Activated B cell treated with CpG ODN at 0.5 μM for 24 hours (primary cell): ENCODE measurements at regions of chr18 and their contacts with region 1.

Region 1: DNA sequence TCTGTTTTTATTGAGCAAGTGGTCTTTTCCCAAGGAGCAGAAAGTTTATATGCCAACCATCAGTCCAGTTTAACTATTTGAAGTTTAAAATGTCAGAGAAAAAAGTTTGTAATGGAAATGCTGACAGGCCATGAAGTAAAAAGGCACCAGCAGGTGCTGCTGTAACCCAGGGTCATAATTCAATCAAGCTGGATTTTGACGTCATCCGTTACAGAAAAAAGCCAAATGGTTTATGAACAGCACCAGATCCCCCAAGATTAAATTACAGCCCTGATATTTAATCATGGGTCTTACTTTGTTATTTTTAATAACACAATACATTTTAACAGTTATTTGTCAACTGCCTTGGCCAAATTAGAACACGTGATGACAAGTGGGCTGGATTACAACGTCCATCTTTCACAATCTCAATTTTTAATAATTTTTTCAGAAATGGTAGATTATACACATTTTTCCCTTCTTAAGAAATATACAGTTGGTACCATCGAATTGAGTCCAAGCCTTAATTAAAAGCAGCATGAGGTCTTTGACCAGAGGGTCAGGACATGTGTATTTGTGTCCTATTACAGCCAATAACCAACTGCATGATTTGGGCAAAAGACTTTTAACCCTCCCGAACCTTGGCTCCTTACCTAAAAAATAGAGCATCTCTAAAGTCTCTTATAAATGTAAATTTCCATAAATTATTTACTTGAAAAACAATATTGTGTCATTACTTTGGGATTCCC is 10.0 kb downstream of the TCF4 start:
- DNase-seq: no peak
- ATAC-seq: no peak
- H3K4me3 Mint-ChIP-seq: no peak overlapping the region
- H3K27ac Mint-ChIP-seq: no peak overlapping the region
- H3K4me1 Mint-ChIP-seq: peaks cover 17% of the 10 kb centered on the region
- H3K27me3 Mint-ChIP-seq: peaks cover 2% of the 10 kb centered on the region
- CTCF ChIP-seq: no peak

Region 2: DNA sequence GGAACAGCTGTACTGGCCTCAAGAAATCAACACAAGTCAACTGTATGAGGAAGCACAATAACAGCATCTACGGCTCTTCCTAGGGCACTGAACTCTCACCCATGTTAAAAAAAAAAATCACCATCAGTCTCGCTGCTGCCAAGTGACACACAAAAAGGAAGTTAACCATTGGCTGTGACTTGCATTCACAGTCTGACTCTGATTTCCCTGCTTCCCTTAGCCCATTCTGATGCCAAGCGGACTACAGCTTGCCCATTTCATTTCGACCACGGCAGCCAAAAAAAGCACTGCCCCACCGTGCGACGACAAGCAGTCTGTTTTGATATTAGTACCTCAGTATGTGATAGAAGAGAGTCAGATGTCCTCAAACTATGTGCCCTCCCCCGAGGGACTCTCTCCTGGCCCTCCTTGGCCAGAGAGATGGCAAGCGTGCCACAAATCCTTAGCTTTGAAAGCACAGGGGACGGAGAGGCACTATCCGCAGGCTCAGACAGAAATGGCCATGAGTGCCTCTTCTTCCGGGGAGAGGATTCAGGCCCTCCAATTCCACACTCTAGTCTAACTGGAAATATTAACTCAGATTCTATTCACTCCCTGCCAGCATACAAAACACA is 240.0 kb before region 1 on chr18:
- CTCF ChIA-PET with region 1: no interaction called
- POLR2A ChIA-PET with region 1: no interaction called
- intact Hi-C with region 1: loop called (anchors 5 kb)
- DNase-seq: peak; percentile 24
- ATAC-seq: peak; percentile 81
- H3K4me3 Mint-ChIP-seq: peak overlapping the region; percentile 76
- H3K27ac Mint-ChIP-seq: peak overlapping the region; percentile 81
- H3K4me1 Mint-ChIP-seq: peaks cover 35% of the 10 kb centered on the region
- H3K27me3 Mint-ChIP-seq: no peaks in the 10 kb centered on the region
- CTCF ChIP-seq: no peak

Region 3: GRCh38 chr18:55384551-55385275 is 193.3 kb before region 1 on chr18:
- CTCF ChIA-PET with region 1: no interaction called
- POLR2A ChIA-PET with region 1: interaction called, 13 read pairs
- intact Hi-C with region 1: no loop called
- DNase-seq: no peak
- ATAC-seq: peak; percentile 65
- H3K4me3 Mint-ChIP-seq: peak overlapping the region; percentile 55
- H3K27ac Mint-ChIP-seq: peak overlapping the region; percentile 78
- H3K4me1 Mint-ChIP-seq: peaks cover 51% of the 10 kb centered on the region
- H3K27me3 Mint-ChIP-seq: no peaks in the 10 kb centered on the region
- CTCF ChIP-seq: no peak

Region 4: GRCh38 chr18:56314396-56314795 is 736.4 kb after region 1 on chr18:
- CTCF ChIA-PET with region 1: interaction called, 3 read pairs
- POLR2A ChIA-PET with region 1: interaction called, 4 read pairs
- intact Hi-C with region 1: loop called (anchors 5 kb)
- DNase-seq: no peak
- ATAC-seq: peak; percentile 47
- H3K4me3 Mint-ChIP-seq: no peak overlapping the region
- H3K27ac Mint-ChIP-seq: no peak overlapping the region
- H3K4me1 Mint-ChIP-seq: peaks cover 23% of the 10 kb centered on the region
- H3K27me3 Mint-ChIP-seq: no peaks in the 10 kb centered on the region
- CTCF ChIP-seq: no peak

Region 5: GRCh38 chr18:56575819-56576663 is 998.1 kb after region 1 on chr18:
- CTCF ChIA-PET with region 1: interaction called, 4 read pairs
- POLR2A ChIA-PET with region 1: no interaction called
- intact Hi-C with region 1: loop called (anchors 5 kb)
- DNase-seq: no peak
- ATAC-seq: peak; percentile 64
- H3K4me3 Mint-ChIP-seq: no peak overlapping the region
- H3K27ac Mint-ChIP-seq: no peak overlapping the region
- H3K4me1 Mint-ChIP-seq: no peaks in the 10 kb centered on the region
- H3K27me3 Mint-ChIP-seq: peaks cover 5% of the 10 kb centered on the region
- CTCF ChIP-seq: no peak